CD14-positive monocyte (primary cell): ENCODE measurements at regions of chr16 and their contacts with region 1.

Region 1: GRCh38 chr16:27449434-27450195 is 47.6 kb downstream of the IL21R start:
- DNase-seq: peak in 1 of 3 donors; percentile 29
- H3K4me3 ChIP-seq: no peak overlapping the region
- H3K4me3 Mint-ChIP-seq: peak overlapping the region; percentile 24 to 63
- H3K27ac ChIP-seq: no peak overlapping the region
- H3K27ac Mint-ChIP-seq: peak overlapping the region in 2 of 7 donors; percentile 21 to 42
- H3K4me1 ChIP-seq: peaks cover 5 to 10% of the 10 kb centered on the region in 2 donors
- H3K4me1 Mint-ChIP-seq: peaks cover 15% of the 10 kb centered on the region
- H3K27me3 ChIP-seq: peaks cover 3 to 29% of the 10 kb centered on the region in 2 donors
- H3K27me3 Mint-ChIP-seq: peaks cover 31 to 50% (median 31%) of the 10 kb centered on the region in 3 donors
- CTCF ChIP-seq: no peak

Region 2: GRCh38 chr16:25838724-25839186 is 1610.9 kb before region 1 on chr16:
- intact Hi-C with region 1: loop called in 1 of 2 experiments (anchors 10 kb)
- DNase-seq: peak in 2 of 3 donors; percentile 15 to 24
- H3K4me3 ChIP-seq: no peak overlapping the region
- H3K4me3 Mint-ChIP-seq: no peak overlapping the region
- H3K27ac ChIP-seq: no peak overlapping the region
- H3K27ac Mint-ChIP-seq: no peak overlapping the region
- H3K4me1 ChIP-seq: no peaks in the 10 kb centered on the region
- H3K4me1 Mint-ChIP-seq: peaks cover 3% of the 10 kb centered on the region
- H3K27me3 ChIP-seq: peaks cover 0 to 3% of the 10 kb centered on the region in 2 donors
- H3K27me3 Mint-ChIP-seq: peaks cover 0 to 8% (median 1%) of the 10 kb centered on the region in 3 donors
- CTCF ChIP-seq: peak; percentile 84

Region 3: GRCh38 chr16:27389272-27389961 is 60.2 kb before region 1 on chr16:
- intact Hi-C with region 1: no loop called
- DNase-seq: peak in 2 of 3 donors; percentile 7 to 51
- H3K4me3 ChIP-seq: no peak overlapping the region
- H3K4me3 Mint-ChIP-seq: no peak overlapping the region
- H3K27ac ChIP-seq: peak overlapping the region in 1 of 2 donors; percentile 63
- H3K27ac Mint-ChIP-seq: peak overlapping the region; percentile 15 to 78 (median 52)
- H3K4me1 ChIP-seq: peaks cover 27 to 35% of the 10 kb centered on the region in 2 donors
- H3K4me1 Mint-ChIP-seq: peaks cover 25% of the 10 kb centered on the region
- H3K27me3 ChIP-seq: no peaks in the 10 kb centered on the region
- H3K27me3 Mint-ChIP-seq: peaks cover 0 to 3% (median 1%) of the 10 kb centered on the region in 3 donors
- CTCF ChIP-seq: no peak

Region 4: DNA sequence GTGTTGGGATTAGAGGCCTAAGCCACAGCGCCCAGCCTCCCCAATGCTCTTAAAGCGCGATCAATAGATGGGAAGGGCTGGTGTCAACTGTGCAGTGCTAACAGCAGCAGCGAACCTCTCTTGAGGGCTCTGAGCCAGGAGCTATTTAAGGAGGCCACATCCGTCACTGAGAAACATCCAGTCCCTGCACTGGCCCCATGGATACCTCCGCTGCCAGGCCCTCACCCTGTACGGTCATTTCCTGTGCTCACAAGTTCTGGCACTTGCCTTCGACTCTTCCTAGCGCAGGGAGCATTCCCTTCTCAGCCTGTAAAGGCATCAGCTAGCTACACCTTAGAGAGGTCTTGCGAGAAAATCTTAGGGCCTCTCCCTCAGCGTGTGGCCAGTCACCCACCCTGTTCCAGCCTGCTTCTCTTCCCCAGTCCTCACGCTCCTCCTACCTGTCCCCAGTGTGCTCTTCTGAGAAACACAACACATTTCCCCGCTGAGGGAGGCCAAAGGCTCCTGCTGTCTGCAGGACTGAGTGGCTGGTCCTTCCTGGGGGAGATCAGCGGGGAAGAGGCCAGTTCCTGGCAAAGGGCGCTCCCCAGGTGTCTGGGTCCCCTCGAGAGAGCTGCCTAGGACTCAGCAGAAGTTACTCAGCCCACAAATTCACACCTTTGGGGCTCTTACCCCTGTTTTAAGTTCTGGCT is 71.5 kb after region 1 on chr16:
- intact Hi-C with region 1: no loop called
- DNase-seq: no peak
- H3K4me3 ChIP-seq: no peak overlapping the region
- H3K4me3 Mint-ChIP-seq: no peak overlapping the region
- H3K27ac ChIP-seq: no peak overlapping the region
- H3K27ac Mint-ChIP-seq: peak overlapping the region in 1 of 7 donors; percentile 70
- H3K4me1 ChIP-seq: no peaks in the 10 kb centered on the region
- H3K4me1 Mint-ChIP-seq: no peaks in the 10 kb centered on the region
- H3K27me3 ChIP-seq: no peaks in the 10 kb centered on the region
- H3K27me3 Mint-ChIP-seq: peaks cover 0 to 3% (median 0%) of the 10 kb centered on the region in 3 donors
- CTCF ChIP-seq: no peak

Region 5: GRCh38 chr16:27639561-27640276 is 190.1 kb after region 1 on chr16:
- intact Hi-C with region 1: no loop called
- DNase-seq: no peak
- H3K4me3 ChIP-seq: no peak overlapping the region
- H3K4me3 Mint-ChIP-seq: no peak overlapping the region
- H3K27ac ChIP-seq: no peak overlapping the region
- H3K27ac Mint-ChIP-seq: peak overlapping the region in 1 of 7 donors; percentile 26
- H3K4me1 ChIP-seq: no peaks in the 10 kb centered on the region
- H3K4me1 Mint-ChIP-seq: peaks cover 3% of the 10 kb centered on the region
- H3K27me3 ChIP-seq: no peaks in the 10 kb centered on the region
- H3K27me3 Mint-ChIP-seq: peaks cover 0 to 3% (median 2%) of the 10 kb centered on the region in 3 donors
- CTCF ChIP-seq: peak; percentile 51